ENCODE measurements at regions of chr17 and their contacts with region 1.

Region 1: GRCh38 chr17:29148790-29149430 is 31.3 kb downstream of the MYO18A start:
- DNase-seq: peak; percentile 95 to 97 (median 95)
- H3K4me3 ChIP-seq: peak overlapping the region; percentile 42 to 81 (median 42)
- H3K4me3 Mint-ChIP-seq: peak overlapping the region; percentile 69 to 88
- H3K27ac ChIP-seq: peak overlapping the region; percentile 77 to 87
- H3K27ac Mint-ChIP-seq: peak overlapping the region; percentile 89 to 97 (median 96)
- H3K4me1 ChIP-seq: peaks cover 49 to 58% of the 10 kb centered on the region in 2 donors
- H3K4me1 Mint-ChIP-seq: peaks cover 52% of the 10 kb centered on the region
- H3K27me3 ChIP-seq: no peaks in the 10 kb centered on the region
- H3K27me3 Mint-ChIP-seq: peaks cover 0 to under 1% (median 0%) of the 10 kb centered on the region in 3 donors
- CTCF ChIP-seq: peak; percentile 98

Region 2: GRCh38 chr17:29180034-29180787 is 31.3 kb after region 1 on chr17 and contains the start of gene MYO18A:
- intact Hi-C with region 1: loop called (anchors 2 to 5 kb)
- DNase-seq: peak; percentile 72 to 79 (median 78)
- H3K4me3 ChIP-seq: peak within 1 kb of the TSS; percentile 13 to 69 (median 32)
- H3K4me3 Mint-ChIP-seq: peak within 1 kb of the TSS; percentile 57 to 67
- H3K27ac ChIP-seq: peak within 1 kb of the TSS in 1 of 2 donors; percentile 22
- H3K27ac Mint-ChIP-seq: peak within 1 kb of the TSS in 5 of 7 donors; percentile 13 to 66 (median 37)
- H3K4me1 ChIP-seq: peaks cover 32 to 40% of the 10 kb centered on the region in 2 donors
- H3K4me1 Mint-ChIP-seq: peaks cover 44% of the 10 kb centered on the region
- H3K27me3 ChIP-seq: peaks cover 0 to 15% of the 10 kb centered on the region in 2 donors
- H3K27me3 Mint-ChIP-seq: peaks cover 4 to 25% (median 23%) of the 10 kb centered on the region in 3 donors
- CTCF ChIP-seq: peak; percentile 85
- polyA plus RNA-seq, gene MYO18A: 6.3 to 40.2 (median 11.0) TPM

Region 3: GRCh38 chr17:29219378-29220047 is 70.6 kb after region 1 on chr17:
- intact Hi-C with region 1: loop called (anchors 5 kb)
- DNase-seq: peak; percentile 62 to 80 (median 76)
- H3K4me3 ChIP-seq: no peak overlapping the region
- H3K4me3 Mint-ChIP-seq: peak overlapping the region in 1 of 2 donors; percentile 42
- H3K27ac ChIP-seq: no peak overlapping the region
- H3K27ac Mint-ChIP-seq: peak overlapping the region in 2 of 7 donors; percentile 30 to 50
- H3K4me1 ChIP-seq: peaks cover 13% of the 10 kb centered on the region in 2 donors
- H3K4me1 Mint-ChIP-seq: peaks cover 27% of the 10 kb centered on the region
- H3K27me3 ChIP-seq: no peaks in the 10 kb centered on the region
- H3K27me3 Mint-ChIP-seq: peaks cover 0 to 1% (median 1%) of the 10 kb centered on the region in 3 donors
- CTCF ChIP-seq: peak; percentile 91

Region 4: DNA sequence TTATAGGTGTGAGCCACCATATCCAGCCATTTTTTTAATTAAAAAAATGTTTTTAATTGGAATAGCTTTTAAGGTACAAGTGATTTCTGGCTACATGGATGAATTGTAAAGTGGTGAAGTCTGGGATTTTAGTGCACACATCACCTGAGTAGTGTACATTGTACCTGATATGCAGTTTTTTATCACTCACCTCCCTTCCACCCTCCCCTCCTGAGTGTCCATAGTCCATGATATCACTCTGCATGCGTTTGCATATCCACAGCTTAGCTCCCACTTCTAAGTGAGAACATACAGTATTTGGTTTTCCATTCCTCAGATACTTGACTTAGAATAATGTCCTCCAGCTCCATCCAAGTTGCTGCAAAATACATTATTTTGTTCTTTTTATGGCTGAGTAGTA is 84.4 kb after region 1 on chr17:
- intact Hi-C with region 1: no loop called
- DNase-seq: no peak
- H3K4me3 ChIP-seq: no peak overlapping the region
- H3K4me3 Mint-ChIP-seq: no peak overlapping the region
- H3K27ac ChIP-seq: no peak overlapping the region
- H3K27ac Mint-ChIP-seq: no peak overlapping the region
- H3K4me1 ChIP-seq: peaks cover 17 to 18% of the 10 kb centered on the region in 2 donors
- H3K4me1 Mint-ChIP-seq: peaks cover 21% of the 10 kb centered on the region
- H3K27me3 ChIP-seq: no peaks in the 10 kb centered on the region
- H3K27me3 Mint-ChIP-seq: peaks cover 0 to 3% (median 1%) of the 10 kb centered on the region in 3 donors
- CTCF ChIP-seq: no peak